Ovary (tissue), 10 donors: ENCODE measurements at regions of chr4 and their contacts with region 1.

Region 1: DNA sequence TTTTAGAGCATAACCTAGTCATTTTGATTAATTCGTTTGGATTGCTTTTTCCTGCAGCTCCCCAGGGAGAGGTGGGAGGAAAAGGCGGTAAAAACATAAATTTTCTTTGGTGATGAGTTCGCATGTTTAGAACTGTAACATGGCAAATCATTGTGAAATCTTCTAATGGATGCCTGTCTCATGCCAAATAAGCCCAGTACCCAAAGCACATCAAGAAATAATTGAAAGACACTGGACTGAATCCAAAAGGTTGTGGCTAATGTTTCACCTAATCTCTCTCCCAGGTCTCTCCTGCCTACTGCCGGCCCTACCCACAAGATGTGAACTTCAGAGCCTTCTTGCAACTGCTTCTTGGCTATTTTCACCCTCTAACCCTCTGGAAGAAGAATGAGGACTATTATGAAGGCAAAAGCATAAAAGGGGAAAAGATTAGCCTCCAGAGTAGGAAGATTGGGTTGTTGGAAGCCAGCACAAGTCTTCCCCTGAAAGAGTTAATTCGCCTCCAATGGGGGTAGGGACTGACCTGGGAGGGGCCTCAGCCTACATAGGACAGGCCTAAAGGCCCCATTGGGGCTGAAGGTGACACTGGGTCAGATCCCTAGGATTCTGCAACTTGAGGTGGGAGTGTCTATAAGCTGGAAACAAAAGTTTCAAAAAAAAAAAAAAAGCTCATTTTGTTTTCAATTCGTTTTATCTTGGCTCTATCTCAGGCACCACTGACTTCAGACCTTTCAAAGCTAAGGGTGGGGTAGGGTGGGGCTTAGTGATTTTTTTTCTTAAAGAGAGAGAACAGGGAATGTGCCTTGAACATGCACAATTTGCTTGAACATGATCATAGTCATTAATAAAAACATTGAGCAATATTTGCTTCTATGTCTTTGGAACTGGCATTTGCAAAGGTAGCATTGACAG is 278.6 kb upstream of the KLF3 start:
- DNase-seq: no peak
- H3K4me3 ChIP-seq: no peak overlapping the region
- H3K27ac ChIP-seq: no peak overlapping the region
- H3K4me1 ChIP-seq: peaks cover 22% of the 10 kb centered on the region
- H3K27me3 ChIP-seq: no peaks in the 10 kb centered on the region
- CTCF ChIP-seq: no peak
- EP300 ChIP-seq: no peak
- POLR2A ChIP-seq: no peak

Region 2: DNA sequence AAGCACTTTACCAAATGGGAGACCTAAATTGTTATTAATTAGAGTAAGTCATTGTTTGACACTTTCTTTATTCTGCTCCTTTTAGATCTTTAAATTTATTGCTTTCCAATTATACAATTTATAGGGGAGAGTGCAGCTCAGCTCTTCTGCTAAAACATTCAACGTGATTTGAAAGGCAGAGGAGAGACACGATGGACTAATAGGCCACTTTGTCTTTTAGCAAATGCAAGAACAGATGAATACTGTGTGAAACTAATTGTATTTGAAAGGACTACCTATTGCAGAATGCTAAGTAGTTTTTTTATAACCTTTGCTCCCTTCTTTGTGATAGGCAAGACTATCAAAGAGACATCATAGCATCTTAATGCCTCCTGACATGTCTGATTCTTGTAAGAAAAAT is 41.7 kb before region 1 on chr4:
- intact Hi-C with region 1: loop called in 1 of 4 experiments (anchors 1 kb)
- DNase-seq: no peak
- H3K4me3 ChIP-seq: no peak overlapping the region
- H3K27ac ChIP-seq: no peak overlapping the region
- H3K4me1 ChIP-seq: no peaks in the 10 kb centered on the region
- H3K27me3 ChIP-seq: no peaks in the 10 kb centered on the region
- CTCF ChIP-seq: no peak
- EP300 ChIP-seq: no peak
- POLR2A ChIP-seq: no peak